WTC11 (cell line): ENCODE measurements at regions of chr3 and their contacts with region 1.

Region 1: GRCh38 chr3:51718547-51719409 is 11.9 kb downstream of the GRM2 start:
- DNase-seq: peak; percentile 92
- ATAC-seq: peak; percentile 87
- H3K4me3 Mint-ChIP-seq: no peak overlapping the region
- H3K27ac Mint-ChIP-seq: no peak overlapping the region
- H3K4me1 Mint-ChIP-seq: peaks cover 16% of the 10 kb centered on the region
- H3K27me3 Mint-ChIP-seq: peaks cover 3% of the 10 kb centered on the region; the same call in 1 of the 2 replicates
- CTCF ChIP-seq: peak; percentile 60

Region 2: DNA sequence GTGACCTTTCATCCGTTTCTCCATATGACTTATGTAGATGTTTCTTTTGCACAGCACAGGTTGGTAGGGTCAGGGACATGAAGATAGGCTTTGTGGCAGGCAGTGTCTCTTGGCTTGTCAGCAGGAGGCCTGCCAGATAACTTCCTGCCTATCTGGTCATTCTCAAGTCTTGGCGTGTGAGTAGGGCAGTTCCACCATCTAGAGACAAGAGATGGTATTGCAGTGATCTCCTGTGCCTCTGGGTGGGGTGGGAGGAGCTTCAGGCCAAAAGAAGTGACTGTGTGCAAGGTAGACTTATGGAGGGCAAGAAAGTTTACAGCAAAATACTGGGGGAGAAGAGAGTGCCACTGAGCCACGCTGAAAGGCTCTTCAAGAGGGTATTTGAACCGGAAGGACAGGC is 36.7 kb before region 1 on chr3:
- CTCF ChIA-PET with region 1: interaction called, 18 read pairs
- POLR2A ChIA-PET with region 1: no interaction called
- DNase-seq: peak; percentile 72
- ATAC-seq: peak; percentile 91
- H3K4me3 Mint-ChIP-seq: no peak overlapping the region
- H3K27ac Mint-ChIP-seq: peak overlapping the region; percentile 72; the same call in 1 of the 2 replicates
- H3K4me1 Mint-ChIP-seq: peaks cover 18% of the 10 kb centered on the region
- H3K27me3 Mint-ChIP-seq: no peaks in the 10 kb centered on the region
- CTCF ChIP-seq: peak; percentile 70

Region 3: GRCh38 chr3:51729042-51729633 is 10.4 kb after region 1 on chr3:
- CTCF ChIA-PET with region 1: interaction called, 19 read pairs
- POLR2A ChIA-PET with region 1: no interaction called
- DNase-seq: no peak
- ATAC-seq: no peak
- H3K4me3 Mint-ChIP-seq: no peak overlapping the region
- H3K27ac Mint-ChIP-seq: no peak overlapping the region
- H3K4me1 Mint-ChIP-seq: peaks cover 2% of the 10 kb centered on the region
- H3K27me3 Mint-ChIP-seq: no peaks in the 10 kb centered on the region; the same call in none of the 2 replicates
- CTCF ChIP-seq: no peak

Region 4: DNA sequence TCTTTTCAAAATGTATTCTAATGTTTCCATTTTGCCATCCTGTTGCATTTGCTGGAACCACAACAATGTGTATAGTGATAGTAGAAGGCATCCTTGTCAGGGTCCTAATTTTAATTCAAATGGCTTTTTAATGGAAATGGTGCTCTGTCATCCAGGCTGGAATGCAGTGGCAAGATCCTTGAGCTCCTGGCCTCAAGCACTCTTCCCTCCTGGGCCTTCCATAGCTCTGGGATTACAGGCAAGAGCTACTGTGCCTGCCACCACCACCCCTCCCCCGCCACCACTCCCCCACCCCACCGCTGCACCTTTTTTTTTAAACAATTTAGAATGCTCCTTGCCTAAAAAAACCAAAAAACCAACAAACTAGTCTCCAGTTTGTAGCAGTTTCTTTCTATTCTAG is 75.4 kb after region 1 on chr3:
- CTCF ChIA-PET with region 1: interaction called, 190 read pairs
- POLR2A ChIA-PET with region 1: no interaction called
- DNase-seq: peak; percentile 46
- ATAC-seq: peak; percentile 93
- H3K4me3 Mint-ChIP-seq: no peak overlapping the region; the same call in 1 of the 2 replicates
- H3K27ac Mint-ChIP-seq: no peak overlapping the region
- H3K4me1 Mint-ChIP-seq: peaks cover 65% of the 10 kb centered on the region
- H3K27me3 Mint-ChIP-seq: no peaks in the 10 kb centered on the region
- CTCF ChIP-seq: no peak

Region 5: GRCh38 chr3:51819709-51820406 is 101.1 kb after region 1 on chr3:
- CTCF ChIA-PET with region 1: interaction called, 99 read pairs
- POLR2A ChIA-PET with region 1: interaction called, 5 read pairs
- DNase-seq: peak; percentile 82
- ATAC-seq: peak; percentile 99
- H3K4me3 Mint-ChIP-seq: no peak overlapping the region
- H3K27ac Mint-ChIP-seq: no peak overlapping the region
- H3K4me1 Mint-ChIP-seq: 0 out of 2 replicates have a peak, but pooled peaks cover 4% of the 10 kb centered on the region
- H3K27me3 Mint-ChIP-seq: peaks cover 13% of the 10 kb centered on the region
- CTCF ChIP-seq: peak; percentile 76

Region 6: GRCh38 chr3:51896607-51897305 is 178.0 kb after region 1 on chr3:
- CTCF ChIA-PET with region 1: interaction called, 13 read pairs
- POLR2A ChIA-PET with region 1: no interaction called
- DNase-seq: no peak
- ATAC-seq: no peak
- H3K4me3 Mint-ChIP-seq: no peak overlapping the region
- H3K27ac Mint-ChIP-seq: no peak overlapping the region
- H3K4me1 Mint-ChIP-seq: peaks cover 14% of the 10 kb centered on the region
- H3K27me3 Mint-ChIP-seq: peaks cover 5% of the 10 kb centered on the region
- CTCF ChIP-seq: no peak

Region 7: GRCh38 chr3:52108302-52109232 is 389.8 kb after region 1 on chr3:
- CTCF ChIA-PET with region 1: no interaction called
- POLR2A ChIA-PET with region 1: no interaction called
- DNase-seq: peak; percentile 30
- ATAC-seq: peak; percentile 80
- H3K4me3 Mint-ChIP-seq: no peak overlapping the region
- H3K27ac Mint-ChIP-seq: peak overlapping the region; percentile 30; the same call in 1 of the 2 replicates
- H3K4me1 Mint-ChIP-seq: peaks cover 3% of the 10 kb centered on the region; the same call in 1 of the 2 replicates
- H3K27me3 Mint-ChIP-seq: no peaks in the 10 kb centered on the region
- CTCF ChIP-seq: no peak